ENCODE measurements at regions of chr18 and their contacts with region 1.

Region 1: GRCh38 chr18:44758861-44759631 is 78.4 kb downstream of the SETBP1 start:
- DNase-seq: peak; percentile 98
- ATAC-seq: peak; percentile 93
- H3K4me3 ChIP-seq: peak overlapping the region; percentile 28
- H3K27ac ChIP-seq: peak overlapping the region; percentile 98
- H3K4me1 ChIP-seq: peaks cover 35% of the 10 kb centered on the region
- H3K27me3 ChIP-seq: no peaks in the 10 kb centered on the region
- CTCF ChIP-seq: no peak
- EP300 ChIP-seq: peak; percentile 99 to 100
- POLR2A ChIP-seq: no peak
- RAD21 ChIP-seq: peak; percentile 22; the same call in 1 of the 2 replicates

Region 2: GRCh38 chr18:44725300-44726096 is 33.5 kb before region 1 on chr18:
- CTCF ChIA-PET with region 1: interaction called, 22 read pairs
- POLR2A ChIA-PET with region 1: interaction called, 14 read pairs
- RAD21 ChIA-PET with region 1: interaction called, 62 read pairs
- SMC1A ChIA-PET with region 1: interaction called, 111 read pairs
- in situ Hi-C with region 1: no loop called
- intact Hi-C with region 1: loop called (anchors 1 kb)
- DNase-seq: peak; percentile 71
- ATAC-seq: peak; percentile 73
- H3K4me3 ChIP-seq: peak overlapping the region; percentile 33; the same call in 1 of the 2 replicates
- H3K27ac ChIP-seq: peak overlapping the region; percentile 35
- H3K4me1 ChIP-seq: peaks cover 73% of the 10 kb centered on the region
- H3K27me3 ChIP-seq: no peaks in the 10 kb centered on the region
- CTCF ChIP-seq: no peak
- EP300 ChIP-seq: peak; percentile 50 to 89; a peak in 3 of 4 replicates
- POLR2A ChIP-seq: no peak
- RAD21 ChIP-seq: peak; percentile 30; the same call in 1 of the 2 replicates

Region 3: DNA sequence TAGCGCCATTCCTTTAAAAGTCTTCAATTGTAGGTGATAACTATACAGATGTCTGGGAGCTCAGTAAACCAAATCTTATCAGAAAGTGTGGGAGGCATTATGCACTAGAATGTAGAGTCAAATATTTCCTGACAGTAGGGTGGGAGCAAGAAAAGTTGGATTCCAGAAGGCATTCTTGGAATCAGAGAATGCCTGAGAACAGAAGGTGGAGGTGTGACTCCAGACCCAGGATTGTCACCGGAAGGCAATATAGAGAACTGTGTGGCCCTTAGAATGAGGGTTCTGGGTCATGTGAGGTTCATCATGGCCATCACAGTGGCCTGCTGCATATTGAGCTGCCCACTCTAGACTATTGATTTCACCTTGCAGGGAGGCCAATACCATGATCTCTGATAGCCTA is 11.6 kb after region 1 on chr18:
- CTCF ChIA-PET with region 1: interaction called, 11 read pairs
- POLR2A ChIA-PET with region 1: interaction called, 5 read pairs
- RAD21 ChIA-PET with region 1: interaction called, 6 read pairs
- SMC1A ChIA-PET with region 1: interaction called, 21 read pairs
- in situ Hi-C with region 1: no loop called
- intact Hi-C with region 1: no loop called
- DNase-seq: no peak
- ATAC-seq: no peak
- H3K4me3 ChIP-seq: no peak overlapping the region
- H3K27ac ChIP-seq: no peak overlapping the region
- H3K4me1 ChIP-seq: no peaks in the 10 kb centered on the region
- H3K27me3 ChIP-seq: no peaks in the 10 kb centered on the region
- CTCF ChIP-seq: no peak
- EP300 ChIP-seq: no peak
- POLR2A ChIP-seq: no peak
- RAD21 ChIP-seq: no peak

Region 4: GRCh38 chr18:44796442-44797428 is 37.7 kb after region 1 on chr18:
- CTCF ChIA-PET with region 1: interaction called, 5 read pairs
- POLR2A ChIA-PET with region 1: interaction called, 11 read pairs
- RAD21 ChIA-PET with region 1: interaction called, 45 read pairs
- SMC1A ChIA-PET with region 1: interaction called, 69 read pairs
- in situ Hi-C with region 1: no loop called
- intact Hi-C with region 1: loop called (anchors 1 kb)
- DNase-seq: no peak
- ATAC-seq: peak; percentile 70
- H3K4me3 ChIP-seq: no peak overlapping the region
- H3K27ac ChIP-seq: no peak overlapping the region
- H3K4me1 ChIP-seq: peaks cover 24% of the 10 kb centered on the region
- H3K27me3 ChIP-seq: no peaks in the 10 kb centered on the region
- CTCF ChIP-seq: no peak
- EP300 ChIP-seq: no peak
- POLR2A ChIP-seq: no peak
- RAD21 ChIP-seq: no peak

Region 5: GRCh38 chr18:44838971-44839666 is 80.1 kb after region 1 on chr18:
- CTCF ChIA-PET with region 1: no interaction called
- POLR2A ChIA-PET with region 1: interaction called, 4 read pairs
- RAD21 ChIA-PET with region 1: interaction called, 4 read pairs
- SMC1A ChIA-PET with region 1: interaction called, 14 read pairs
- in situ Hi-C with region 1: no loop called
- intact Hi-C with region 1: no loop called
- DNase-seq: peak; percentile 64
- ATAC-seq: peak; percentile 96
- H3K4me3 ChIP-seq: peak overlapping the region; percentile 18; the same call in 1 of the 2 replicates
- H3K27ac ChIP-seq: peak overlapping the region; percentile 40
- H3K4me1 ChIP-seq: peaks cover 23% of the 10 kb centered on the region
- H3K27me3 ChIP-seq: no peaks in the 10 kb centered on the region
- CTCF ChIP-seq: no peak
- EP300 ChIP-seq: 0 out of 4 replicates have a peak, but pooled peaks of 1 of the 2 experiments have one; percentile 44
- POLR2A ChIP-seq: no peak
- RAD21 ChIP-seq: no peak

Region 6: GRCh38 chr18:45106331-45106774 is 347.3 kb after region 1 on chr18:
- CTCF ChIA-PET with region 1: interaction called, 3 read pairs
- POLR2A ChIA-PET with region 1: no interaction called
- RAD21 ChIA-PET with region 1: interaction called, 9 read pairs
- SMC1A ChIA-PET with region 1: interaction called, 8 read pairs
- in situ Hi-C with region 1: no loop called
- intact Hi-C with region 1: loop called (anchors 1 kb)
- DNase-seq: peak; percentile 87
- ATAC-seq: peak; percentile 83
- H3K4me3 ChIP-seq: no peak overlapping the region
- H3K27ac ChIP-seq: peak overlapping the region; percentile 92
- H3K4me1 ChIP-seq: peaks cover 47% of the 10 kb centered on the region
- H3K27me3 ChIP-seq: no peaks in the 10 kb centered on the region
- CTCF ChIP-seq: no peak
- EP300 ChIP-seq: peak; percentile 97 to 99
- POLR2A ChIP-seq: no peak
- RAD21 ChIP-seq: no peak